Esophagus muscularis mucosa (tissue), 4 donors: ENCODE measurements at regions of chr17 and their contacts with region 1.

Region 1: GRCh38 chr17:21214015-21214776 is at the start of gene TMEM11:
- DNase-seq: peak; percentile 98
- H3K4me3 ChIP-seq: peak within 1 kb of the TSS; percentile 90 to 97 (median 95)
- H3K27ac ChIP-seq: peak within 1 kb of the TSS; percentile 89 to 96 (median 92)
- H3K4me1 ChIP-seq: peaks cover 51 to 71% (median 56%) of the 10 kb centered on the region in 4 donors
- H3K27me3 ChIP-seq: peaks cover 0 to 7% (median 0%) of the 10 kb centered on the region in 4 donors
- CTCF ChIP-seq: no peak
- EP300 ChIP-seq: no peak
- POLR2A ChIP-seq: peak; percentile 81
- total RNA-seq, gene TMEM11: 24.1 to 31.0 (median 26.0) TPM

Region 2: DNA sequence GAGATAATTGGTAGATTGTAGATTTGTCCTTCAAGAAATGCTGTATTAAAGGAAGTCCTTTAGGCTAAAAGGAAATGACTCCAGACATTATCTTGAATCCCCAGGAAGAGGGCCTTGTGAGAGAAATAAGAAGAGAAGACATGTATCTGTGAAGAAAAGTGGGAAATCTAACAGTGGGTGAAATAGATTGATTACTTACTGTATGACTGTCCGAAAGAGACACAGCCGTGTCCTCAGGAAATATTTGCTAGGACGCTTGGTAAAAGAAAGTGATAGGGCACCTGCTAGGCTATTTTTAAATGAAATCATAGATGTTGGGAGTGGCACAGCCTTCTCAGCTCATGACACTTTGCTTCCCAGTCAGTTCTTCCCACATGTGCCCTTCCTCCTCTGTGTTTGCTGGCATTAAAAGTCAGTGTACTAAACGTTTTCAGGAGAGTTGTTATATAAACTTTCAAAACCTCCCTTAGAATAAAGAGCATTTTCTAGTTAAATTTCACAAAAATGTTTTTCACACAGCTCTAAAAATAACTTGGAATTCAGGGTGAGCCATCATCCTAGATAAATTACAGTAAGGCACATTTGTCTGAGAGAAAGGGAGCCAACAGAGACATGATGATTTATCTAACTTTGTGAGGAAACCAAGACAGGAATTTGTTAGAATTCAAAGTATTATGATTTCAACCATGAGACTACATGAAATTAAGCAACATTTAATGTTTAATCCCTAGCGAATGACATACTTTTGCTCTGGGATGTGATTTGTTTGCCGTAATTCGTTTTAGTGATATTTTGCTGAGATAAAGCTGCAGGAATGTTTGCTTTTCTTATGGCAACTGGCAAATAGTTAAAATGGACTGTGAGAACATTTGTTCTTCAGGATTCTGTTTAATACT is 52.5 kb before region 1 on chr17:
- intact Hi-C with region 1: loop called (anchors 5 kb)
- DNase-seq: no peak
- H3K4me3 ChIP-seq: no peak overlapping the region
- H3K27ac ChIP-seq: peak overlapping the region; percentile 5 to 72 (median 46)
- H3K4me1 ChIP-seq: peaks cover 28 to 48% (median 35%) of the 10 kb centered on the region in 4 donors
- H3K27me3 ChIP-seq: no peaks in the 10 kb centered on the region
- CTCF ChIP-seq: no peak
- EP300 ChIP-seq: no peak
- POLR2A ChIP-seq: no peak